ENCODE measurements at regions of chr9 and their contacts with region 1.

Region 1: DNA sequence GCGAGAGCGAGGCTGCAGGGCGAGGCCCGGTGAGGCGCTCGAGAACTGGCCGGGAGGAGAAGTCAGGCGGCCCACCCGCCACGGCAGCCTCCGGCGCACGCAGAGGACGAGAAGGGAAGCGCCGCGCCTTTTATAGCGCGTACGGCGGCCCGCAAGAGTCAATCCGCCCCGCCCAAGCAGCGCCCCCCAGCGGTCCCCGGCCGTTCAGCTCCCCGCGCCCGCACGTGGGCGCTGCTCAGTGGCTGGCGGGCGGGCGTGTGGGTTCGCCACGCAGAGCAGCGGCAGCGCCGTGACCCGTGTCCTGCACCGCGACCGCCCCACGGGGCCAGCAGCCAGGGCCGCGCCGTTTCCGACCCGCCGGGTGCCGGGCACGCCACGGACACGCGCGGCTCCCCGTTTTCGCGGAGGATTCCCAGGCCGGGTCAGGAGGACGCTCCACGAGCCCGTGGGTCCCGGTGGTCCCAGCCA is 14.6 kb downstream of the LCN10 start:
- DNase-seq: peak; percentile 92
- H3K4me3 Mint-ChIP-seq: peak overlapping the region; percentile 93
- H3K27ac Mint-ChIP-seq: no peak overlapping the region
- H3K4me1 Mint-ChIP-seq: peaks cover 40% of the 10 kb centered on the region
- H3K27me3 Mint-ChIP-seq: no peaks in the 10 kb centered on the region

Region 2: DNA sequence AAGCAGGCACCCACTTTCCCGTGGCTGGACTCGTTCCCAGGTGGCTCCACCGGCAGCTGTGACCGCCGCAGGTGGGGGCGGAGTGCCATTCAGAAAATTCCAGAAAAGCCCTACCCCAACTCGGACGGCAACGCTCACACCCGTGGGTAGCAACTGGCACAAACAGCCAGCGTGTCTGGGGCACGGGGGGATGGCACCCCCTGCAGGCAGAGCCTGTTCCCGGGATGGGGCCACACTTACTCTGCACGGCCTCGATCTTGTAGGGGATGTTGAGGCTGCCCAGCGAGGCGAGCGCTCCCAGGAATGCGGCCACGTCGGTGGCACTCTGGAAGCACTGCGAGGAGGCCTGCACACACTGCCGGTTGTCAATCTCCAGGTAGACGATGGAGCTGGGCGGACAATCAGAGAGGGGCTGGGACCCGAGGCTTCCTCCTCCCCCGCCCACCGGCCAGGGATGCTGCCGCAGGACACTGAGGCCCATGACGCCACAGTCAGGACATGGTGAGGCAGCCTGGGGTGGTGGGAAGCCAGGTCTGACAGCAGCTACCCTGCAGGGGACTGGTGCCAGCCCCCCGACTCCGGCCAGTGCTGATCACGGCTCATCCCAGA is 225.1 kb before region 1 on chr9:
- CTCF ChIA-PET with region 1: no interaction called
- POLR2A ChIA-PET with region 1: no interaction called
- DNase-seq: no peak
- H3K4me3 Mint-ChIP-seq: no peak overlapping the region
- H3K27ac Mint-ChIP-seq: no peak overlapping the region
- H3K4me1 Mint-ChIP-seq: no peaks in the 10 kb centered on the region
- H3K27me3 Mint-ChIP-seq: no peaks in the 10 kb centered on the region

Region 3: GRCh38 chr9:136539427-136540421 is 188.4 kb before region 1 on chr9:
- CTCF ChIA-PET with region 1: no interaction called
- POLR2A ChIA-PET with region 1: interaction called, 29 read pairs
- DNase-seq: peak; percentile 97
- H3K4me3 Mint-ChIP-seq: peak overlapping the region; percentile 70
- H3K27ac Mint-ChIP-seq: peak overlapping the region; percentile 99
- H3K4me1 Mint-ChIP-seq: peaks cover 76% of the 10 kb centered on the region
- H3K27me3 Mint-ChIP-seq: no peaks in the 10 kb centered on the region

Region 4: DNA sequence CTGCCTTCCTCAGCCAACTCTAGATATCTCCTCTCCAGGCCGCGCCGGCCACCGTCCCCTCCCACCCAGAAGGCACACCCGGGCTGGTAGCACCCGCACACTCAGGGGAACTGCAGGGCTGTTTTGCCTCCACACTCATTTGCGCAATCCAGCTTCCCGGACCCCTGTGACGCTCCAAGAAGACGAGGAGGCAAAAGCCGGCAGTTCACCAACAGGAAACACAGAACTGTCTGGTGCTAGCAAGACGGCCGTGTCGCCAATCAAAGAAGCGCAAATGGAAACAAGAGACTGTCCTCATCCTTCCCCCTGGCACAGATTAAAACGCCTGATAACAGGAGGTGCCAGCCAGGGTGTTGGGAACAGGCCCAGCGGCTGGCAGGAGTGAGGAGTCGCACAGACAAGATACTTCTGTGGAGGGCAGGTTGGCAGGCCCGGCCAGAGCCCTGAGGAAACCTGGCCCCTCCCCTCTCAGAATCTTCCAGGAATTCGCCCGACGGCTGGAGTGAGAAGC is 48.6 kb before region 1 on chr9:
- CTCF ChIA-PET with region 1: no interaction called
- POLR2A ChIA-PET with region 1: no interaction called
- DNase-seq: no peak
- H3K4me3 Mint-ChIP-seq: no peak overlapping the region
- H3K27ac Mint-ChIP-seq: no peak overlapping the region
- H3K4me1 Mint-ChIP-seq: no peaks in the 10 kb centered on the region
- H3K27me3 Mint-ChIP-seq: no peaks in the 10 kb centered on the region

Region 5: GRCh38 chr9:136707849-136708517 is 20.1 kb before region 1 on chr9:
- CTCF ChIA-PET with region 1: interaction called, 6 read pairs
- POLR2A ChIA-PET with region 1: interaction called, 23 read pairs
- DNase-seq: no peak
- H3K4me3 Mint-ChIP-seq: no peak overlapping the region
- H3K27ac Mint-ChIP-seq: no peak overlapping the region
- H3K4me1 Mint-ChIP-seq: peaks cover 2% of the 10 kb centered on the region
- H3K27me3 Mint-ChIP-seq: peaks cover 29% of the 10 kb centered on the region

Region 6: GRCh38 chr9:136742591-136743391 is 14.7 kb after region 1 on chr9 and contains the start of gene LCN10:
- CTCF ChIA-PET with region 1: interaction called, 7 read pairs
- POLR2A ChIA-PET with region 1: interaction called, 12 read pairs
- DNase-seq: no peak
- H3K4me3 Mint-ChIP-seq: no peak within 1 kb of the TSS
- H3K27ac Mint-ChIP-seq: no peak within 1 kb of the TSS
- H3K4me1 Mint-ChIP-seq: peaks cover 6% of the 10 kb centered on the region
- H3K27me3 Mint-ChIP-seq: peaks cover 14% of the 10 kb centered on the region
- total RNA-seq, gene LCN10: not detected

Region 7: GRCh38 chr9:136858844-136859757 is 131.0 kb after region 1 on chr9:
- CTCF ChIA-PET with region 1: no interaction called
- POLR2A ChIA-PET with region 1: no interaction called
- DNase-seq: no peak
- H3K4me3 Mint-ChIP-seq: no peak overlapping the region
- H3K27ac Mint-ChIP-seq: no peak overlapping the region
- H3K4me1 Mint-ChIP-seq: peaks cover 8% of the 10 kb centered on the region
- H3K27me3 Mint-ChIP-seq: no peaks in the 10 kb centered on the region

Region 8: DNA sequence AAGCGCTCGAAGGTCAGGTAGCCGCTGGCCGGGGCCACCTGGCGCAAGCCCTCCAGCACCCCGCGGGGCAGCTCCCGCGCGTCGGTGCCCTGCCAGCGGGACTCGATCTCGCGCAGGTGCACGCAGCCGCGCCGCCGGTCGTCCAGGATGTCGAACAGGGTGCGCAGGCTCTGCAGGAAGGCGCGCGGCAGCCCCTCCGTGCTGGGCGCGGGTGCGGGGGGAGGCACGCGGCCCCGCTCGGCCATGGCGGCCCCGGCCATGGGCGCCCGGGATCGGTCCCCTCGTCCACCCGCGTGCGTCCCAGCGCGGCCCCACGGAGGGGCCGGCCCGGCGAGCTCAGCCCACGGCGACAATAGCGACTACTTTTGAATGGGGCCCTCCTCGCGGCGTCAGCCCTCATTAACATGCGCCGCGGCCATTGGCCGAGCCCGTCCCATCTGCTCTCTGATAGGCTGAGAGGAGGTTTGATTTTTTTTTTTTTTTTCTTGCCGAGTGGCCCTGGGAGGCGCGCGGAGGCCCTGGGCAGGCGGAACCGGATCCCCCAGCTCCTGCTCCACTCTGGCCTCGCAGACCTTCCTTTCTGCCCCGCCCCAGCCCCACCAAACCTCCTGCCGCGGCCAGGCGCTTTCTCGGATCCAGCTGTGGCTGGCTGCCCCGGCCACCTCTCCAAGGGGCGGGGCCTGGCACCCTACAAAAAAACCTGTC is 342.2 kb after region 1 on chr9 and contains the start of gene SAPCD2:
- CTCF ChIA-PET with region 1: interaction called, 12 read pairs
- POLR2A ChIA-PET with region 1: interaction called, 6 read pairs
- DNase-seq: peak; percentile 90
- H3K4me3 Mint-ChIP-seq: peak within 1 kb of the TSS; percentile 73
- H3K27ac Mint-ChIP-seq: peak within 1 kb of the TSS; percentile 63
- H3K4me1 Mint-ChIP-seq: peaks cover 37% of the 10 kb centered on the region
- H3K27me3 Mint-ChIP-seq: no peaks in the 10 kb centered on the region
- total RNA-seq, gene SAPCD2: 26.8 to 27.0 TPM